BJ (cell line): ENCODE measurements at regions of chr1 and their contacts with region 1.

Region 1: DNA sequence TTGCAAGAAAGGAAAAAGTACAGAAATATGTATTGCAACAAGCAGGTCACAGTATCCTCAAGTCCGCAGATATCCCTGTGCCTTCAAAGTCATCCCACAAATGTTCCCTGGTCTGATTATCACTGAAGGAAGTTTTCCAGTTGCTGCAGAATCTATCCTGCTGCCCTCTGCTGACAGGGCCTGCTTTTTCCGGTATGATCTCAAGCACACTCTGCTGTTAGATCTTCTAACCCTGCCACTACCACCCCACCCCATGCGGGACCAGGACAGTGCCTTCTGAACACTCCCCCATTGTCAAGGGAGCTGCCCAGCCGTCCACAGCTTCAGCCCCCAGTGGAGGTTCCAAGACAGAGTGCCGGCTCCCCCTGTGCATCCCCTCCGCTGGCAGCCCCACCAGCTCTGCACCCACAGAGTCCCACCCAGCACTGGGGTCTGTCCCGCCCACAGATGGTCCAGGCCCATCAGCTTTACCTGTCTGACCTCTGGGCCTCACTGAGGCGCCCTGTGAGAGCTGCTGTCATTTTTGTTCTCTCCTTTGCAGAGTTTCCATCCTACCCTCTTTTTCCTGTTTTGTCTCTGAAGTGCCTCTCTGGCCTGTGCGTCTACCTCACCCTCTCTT is 27.9 kb downstream of the FAM163A start:
- DNase-seq: no peak
- H3K4me3 ChIP-seq: no peak overlapping the region
- H3K27me3 ChIP-seq: no peaks in the 10 kb centered on the region
- CTCF ChIP-seq: peak; percentile 7; the same call in 1 of the 2 replicates

Region 2: GRCh38 chr1:178126790-178127189 is 1644.2 kb before region 1 on chr1:
- CTCF ChIA-PET with region 1: no interaction called
- POLR2A ChIA-PET with region 1: interaction called, 22 read pairs
- DNase-seq: peak; percentile 59
- H3K4me3 ChIP-seq: no peak overlapping the region
- H3K27me3 ChIP-seq: no peaks in the 10 kb centered on the region
- CTCF ChIP-seq: no peak